ENCODE measurements at regions of chr2 and their contacts with region 1.

Region 1: DNA sequence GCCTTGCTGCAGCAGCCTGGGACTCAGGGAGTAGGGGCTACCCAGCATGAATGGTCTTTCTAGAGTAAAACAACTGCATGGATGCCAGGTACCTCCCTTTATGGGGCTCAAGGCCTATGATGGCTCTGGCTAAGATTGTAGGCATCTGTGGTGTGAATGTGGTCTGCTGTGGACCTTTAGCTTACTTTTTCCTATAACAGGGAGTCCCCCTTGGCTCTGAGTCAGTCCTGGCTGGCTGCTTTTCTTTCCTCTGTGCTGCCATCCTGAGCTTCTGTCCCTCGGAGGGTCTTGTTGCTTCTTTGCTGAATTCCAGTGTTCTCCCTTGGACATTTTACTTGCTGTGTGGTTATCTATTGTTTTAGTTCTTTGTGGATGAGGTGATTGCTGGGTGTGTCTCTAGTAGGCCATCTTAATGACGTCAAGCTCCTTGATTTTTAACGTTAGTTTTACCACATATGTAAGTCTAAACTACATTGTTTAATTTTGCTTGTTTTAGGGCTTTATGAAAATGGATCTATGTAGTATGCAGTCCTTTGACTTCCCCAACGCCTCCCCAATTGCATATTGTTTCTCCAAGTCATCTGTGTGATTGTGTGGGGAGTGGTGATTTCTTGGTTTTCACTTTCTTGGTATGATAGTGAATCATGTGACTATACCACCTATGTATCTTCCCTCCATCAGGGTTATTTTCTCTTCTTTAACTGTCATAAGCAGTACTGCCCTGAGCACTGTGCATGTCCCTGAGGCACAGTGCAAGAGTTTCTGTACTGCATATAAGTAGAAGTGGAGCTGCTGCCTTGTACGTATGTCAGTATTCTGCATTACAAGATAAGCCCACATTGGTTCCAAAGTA is 92.4 kb downstream of the NCK2 start:
- DNase-seq: no peak
- H3K4me3 Mint-ChIP-seq: peak overlapping the region; percentile 52
- H3K27ac Mint-ChIP-seq: peak overlapping the region; percentile 77
- H3K4me1 Mint-ChIP-seq: peaks cover 73% of the 10 kb centered on the region
- H3K27me3 Mint-ChIP-seq: no peaks in the 10 kb centered on the region

Region 2: GRCh38 chr2:105802587-105802986 is 34.5 kb before region 1 on chr2:
- intact Hi-C with region 1: loop called (anchors 1 kb)
- DNase-seq: peak; percentile 90
- H3K4me3 Mint-ChIP-seq: peak overlapping the region; percentile 68
- H3K27ac Mint-ChIP-seq: peak overlapping the region; percentile 93
- H3K4me1 Mint-ChIP-seq: peaks cover 81% of the 10 kb centered on the region
- H3K27me3 Mint-ChIP-seq: no peaks in the 10 kb centered on the region